ENCODE measurements at regions of chr15 and their contacts with region 1.

Region 1: DNA sequence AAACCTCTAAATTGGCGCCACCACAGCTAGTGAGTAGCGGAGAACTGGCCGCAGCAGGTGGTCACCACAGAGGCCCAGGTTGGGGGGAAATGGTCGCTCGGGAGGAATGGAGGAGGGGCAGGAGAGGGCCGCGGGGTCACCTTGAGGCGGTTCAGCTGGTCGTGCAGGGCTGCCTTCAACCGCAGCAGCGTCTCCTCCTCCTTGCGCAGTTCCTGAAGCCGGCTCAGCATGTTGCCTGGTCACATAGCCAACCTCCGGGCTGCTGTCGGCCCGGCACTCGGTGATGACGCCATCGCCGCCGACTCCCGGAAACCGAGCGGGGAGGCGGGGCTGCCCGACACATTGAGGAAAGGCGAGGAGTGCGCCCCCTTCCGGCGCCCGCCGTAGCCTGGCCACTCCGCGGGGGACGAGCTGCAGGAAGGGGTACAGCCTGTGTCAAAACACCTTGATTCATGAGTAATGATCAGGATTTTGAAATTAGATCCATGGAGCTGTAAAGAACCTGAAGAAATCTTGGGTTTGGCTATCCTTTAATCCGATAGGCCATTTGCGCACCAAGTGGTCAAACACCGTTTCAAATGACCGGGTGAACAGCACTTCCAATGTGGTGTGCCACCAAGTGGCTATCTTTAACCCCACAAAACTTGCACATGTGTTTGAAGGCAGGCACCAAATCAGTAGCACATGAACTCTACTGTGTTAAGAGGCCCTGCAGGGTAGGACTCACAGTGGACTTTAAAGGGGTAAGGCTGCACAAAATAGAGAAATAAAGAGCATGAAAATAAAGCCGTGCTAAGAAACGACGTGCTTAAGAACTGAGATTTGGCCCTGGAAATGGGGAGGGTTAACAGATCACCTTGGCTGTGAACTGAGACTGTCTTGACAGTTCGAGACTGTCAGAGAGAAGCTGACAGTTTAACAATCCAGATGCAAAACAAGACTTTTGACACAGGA is at the start of gene SNAPC5:
- DNase-seq: peak; percentile 96 to 97
- ATAC-seq: peak; percentile 96 to 99 (median 97)
- H3K4me3 ChIP-seq: peak within 1 kb of the TSS; percentile 67 to 97 (median 84)
- H3K27ac ChIP-seq: peak within 1 kb of the TSS; percentile 62 to 91 (median 87)
- H3K4me1 ChIP-seq: peaks cover 8 to 58% (median 31%) of the 10 kb centered on the region in 9 donors
- H3K27me3 ChIP-seq: no peaks in the 10 kb centered on the region
- CTCF ChIP-seq: peak; percentile 92 to 100 (median 98)
- total RNA-seq, gene SNAPC5: 28.5 to 41.6 (median 33.9) TPM

Region 2: GRCh38 chr15:66294932-66295235 is 202.9 kb before region 1 on chr15:
- intact Hi-C with region 1: loop called in 1 of 10 experiments (anchors 5 kb)
- DNase-seq: no peak
- ATAC-seq: no peak
- H3K4me3 ChIP-seq: peak overlapping the region in 6 of 10 donors; percentile 68 to 82 (median 76)
- H3K27ac ChIP-seq: peak overlapping the region in 5 of 10 donors; percentile 92 to 96 (median 94)
- H3K4me1 ChIP-seq: peaks cover 3 to 39% (median 29%) of the 10 kb centered on the region in 9 donors
- H3K27me3 ChIP-seq: no peaks in the 10 kb centered on the region
- CTCF ChIP-seq: no peak

Region 3: GRCh38 chr15:66356345-66357236 is 141.2 kb before region 1 on chr15 and contains the start of gene TIPIN:
- intact Hi-C with region 1: loop called in 2 of 10 experiments (anchors 10 kb)
- DNase-seq: peak; percentile 95 to 97
- ATAC-seq: peak; percentile 98 to 100 (median 99)
- H3K4me3 ChIP-seq: peak within 1 kb of the TSS; percentile 47 to 76 (median 59)
- H3K27ac ChIP-seq: peak within 1 kb of the TSS in 9 of 10 donors; percentile 30 to 87 (median 61)
- H3K4me1 ChIP-seq: peaks cover 0 to 14% (median 5%) of the 10 kb centered on the region in 9 donors
- H3K27me3 ChIP-seq: no peaks in the 10 kb centered on the region
- CTCF ChIP-seq: no peak
- total RNA-seq, gene TIPIN: 2.4 to 5.4 (median 3.4) TPM

Region 4: GRCh38 chr15:66386204-66387123 is 111.3 kb before region 1 on chr15 and contains the start of gene MAP2K1:
- intact Hi-C with region 1: loop called (anchors 1 to 5 kb)
- DNase-seq: peak; percentile 99
- ATAC-seq: peak; percentile 97 to 100 (median 98)
- H3K4me3 ChIP-seq: peak within 1 kb of the TSS; percentile 81 to 98 (median 92)
- H3K27ac ChIP-seq: peak within 1 kb of the TSS; percentile 82 to 97 (median 96)
- H3K4me1 ChIP-seq: peaks cover 4 to 53% (median 45%) of the 10 kb centered on the region in 9 donors
- H3K27me3 ChIP-seq: no peaks in the 10 kb centered on the region
- CTCF ChIP-seq: peak; percentile 54 to 97 (median 86)
- total RNA-seq, gene MAP2K1: 30.9 to 61.3 (median 44.7) TPM

Region 5: DNA sequence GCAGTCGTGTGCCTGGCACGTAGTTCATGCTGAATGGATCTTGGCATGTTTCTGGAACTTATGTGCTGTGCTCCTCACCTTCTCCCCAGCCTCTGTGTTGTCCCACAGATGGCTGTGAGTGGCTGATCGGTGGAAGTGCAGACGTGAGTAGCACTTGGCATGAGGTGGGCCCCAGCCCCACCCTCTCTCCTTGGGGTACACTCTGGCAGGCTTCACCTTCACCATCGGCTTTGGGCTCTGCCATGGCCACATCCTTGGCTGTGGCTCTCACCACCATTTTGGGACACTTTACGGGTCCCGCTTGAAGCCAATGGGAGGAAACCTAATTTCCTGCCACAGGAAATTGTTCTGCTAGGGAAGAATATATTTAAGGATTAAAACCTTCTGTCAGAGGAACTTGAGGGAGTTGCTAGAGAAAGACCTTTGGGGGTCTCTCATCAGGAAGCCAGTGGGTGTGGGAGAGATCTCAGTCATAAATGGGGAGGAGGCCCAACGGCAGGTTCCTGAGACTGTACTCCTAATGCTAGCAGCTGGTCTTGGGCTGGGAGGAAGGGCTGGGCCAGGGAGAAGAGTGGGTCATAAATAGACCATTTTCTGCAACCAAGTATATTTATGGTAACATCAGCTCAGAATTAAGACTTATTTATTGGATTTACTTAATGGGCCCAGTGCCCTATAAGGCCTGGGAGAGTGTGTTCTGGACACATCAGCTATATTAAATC is 659.9 kb after region 1 on chr15:
- intact Hi-C with region 1: no loop called
- DNase-seq: no peak
- ATAC-seq: peak in 7 of 8 donors; percentile 21 to 83 (median 62)
- H3K4me3 ChIP-seq: no peak overlapping the region
- H3K27ac ChIP-seq: peak overlapping the region in 8 of 10 donors; percentile 4 to 62 (median 46)
- H3K4me1 ChIP-seq: peaks cover 0 to 54% (median 37%) of the 10 kb centered on the region in 9 donors
- H3K27me3 ChIP-seq: no peaks in the 10 kb centered on the region
- CTCF ChIP-seq: no peak